Left cardiac atrium (tissue), 4 donors: ENCODE measurements at regions of chr4 and their contacts with region 1.

Region 1: DNA sequence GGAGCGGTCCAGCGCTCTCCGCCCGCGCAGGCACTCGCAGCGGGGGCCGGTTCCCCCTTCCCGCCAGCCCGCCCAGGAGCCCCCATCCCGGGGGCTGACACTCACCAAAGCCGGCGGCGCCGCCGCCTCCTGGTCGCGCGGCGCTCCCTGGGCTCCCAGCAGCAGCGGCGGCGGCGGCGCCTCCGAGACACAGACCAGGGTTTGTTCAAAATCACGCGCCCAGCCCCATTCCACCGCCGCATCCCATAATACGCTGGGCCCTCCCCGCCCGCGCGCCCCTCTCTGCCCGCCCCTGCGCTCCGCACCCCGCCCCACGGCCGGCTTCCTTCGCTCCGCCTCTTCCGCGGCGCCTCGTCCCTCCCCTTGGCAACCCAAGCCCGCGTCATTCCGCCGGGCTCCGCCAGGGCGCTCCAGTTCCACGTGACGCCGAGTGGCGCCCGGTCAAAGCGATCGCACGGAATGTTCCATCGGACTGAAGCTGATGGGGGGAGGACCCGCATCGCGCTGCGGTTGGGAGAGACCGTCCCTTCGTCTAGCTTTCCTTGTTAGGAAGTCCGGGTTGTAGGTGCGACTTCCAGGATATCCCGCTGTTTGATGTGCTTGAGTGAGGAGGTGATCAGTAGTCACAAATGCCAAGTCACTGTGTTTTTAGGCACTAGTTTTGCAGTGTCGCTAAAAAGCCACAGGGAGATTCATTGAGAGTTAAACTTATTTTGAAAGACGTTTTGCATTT is 2.2 kb upstream of the LIN54 start:
- DNase-seq: peak; percentile 97
- ATAC-seq: peak; percentile 98 to 99

Region 2: DNA sequence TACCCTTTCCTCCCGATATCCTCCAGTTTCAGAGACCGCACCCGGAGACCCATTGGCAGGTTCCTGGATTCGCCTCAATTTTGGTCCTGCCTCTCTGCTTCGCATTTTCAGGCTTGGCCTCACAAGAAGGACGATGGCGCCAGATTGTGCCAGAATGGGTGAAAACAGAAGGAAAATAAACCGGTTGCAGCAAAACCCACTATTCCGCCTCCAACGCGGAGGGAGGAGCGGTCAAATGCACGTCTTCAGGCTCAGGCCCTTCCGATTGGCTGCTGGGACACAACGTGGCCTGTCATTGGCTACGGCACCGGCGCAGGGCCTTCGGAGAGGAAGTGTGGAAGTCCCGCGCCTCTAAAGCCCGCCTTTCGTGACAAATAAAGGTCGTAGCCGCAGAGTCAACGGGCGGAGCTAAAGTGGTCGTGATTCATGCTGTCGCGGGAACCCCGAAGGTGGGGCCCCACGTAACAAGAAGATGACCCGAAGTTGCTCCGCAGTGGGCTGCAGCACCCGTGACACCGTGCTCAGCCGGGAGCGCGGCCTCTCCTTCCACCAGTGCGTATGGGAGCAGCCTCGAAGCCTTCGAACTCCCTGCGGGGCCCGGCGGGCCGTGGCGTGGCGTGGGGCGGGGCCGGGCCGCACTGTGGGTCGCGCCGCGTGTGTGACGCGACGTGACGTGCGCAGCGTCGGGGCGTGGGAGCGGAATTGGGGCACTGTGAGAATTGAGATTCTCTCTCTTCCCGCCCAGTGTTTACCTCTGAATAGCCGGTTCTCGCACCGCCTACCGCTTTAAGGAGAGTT is 112.3 kb before region 1 on chr4 and contains the start of gene THAP9:
- intact Hi-C with region 1: loop called (anchors 5 to 10 kb)
- DNase-seq: peak; percentile 99
- ATAC-seq: peak; percentile 97 to 98
- total RNA-seq, gene THAP9: 2.9 to 3.7 TPM

Region 3: GRCh38 chr4:83034630-83035494 is 22.0 kb after region 1 on chr4 and contains the start of gene COPS4:
- intact Hi-C with region 1: loop called in 1 of 2 experiments (anchors 1 kb)
- DNase-seq: peak; percentile 98
- ATAC-seq: peak; percentile 100
- total RNA-seq, gene COPS4: 43.4 to 46.9 TPM